ENCODE measurements at regions of chr2 and their contacts with region 1.

Region 1: DNA sequence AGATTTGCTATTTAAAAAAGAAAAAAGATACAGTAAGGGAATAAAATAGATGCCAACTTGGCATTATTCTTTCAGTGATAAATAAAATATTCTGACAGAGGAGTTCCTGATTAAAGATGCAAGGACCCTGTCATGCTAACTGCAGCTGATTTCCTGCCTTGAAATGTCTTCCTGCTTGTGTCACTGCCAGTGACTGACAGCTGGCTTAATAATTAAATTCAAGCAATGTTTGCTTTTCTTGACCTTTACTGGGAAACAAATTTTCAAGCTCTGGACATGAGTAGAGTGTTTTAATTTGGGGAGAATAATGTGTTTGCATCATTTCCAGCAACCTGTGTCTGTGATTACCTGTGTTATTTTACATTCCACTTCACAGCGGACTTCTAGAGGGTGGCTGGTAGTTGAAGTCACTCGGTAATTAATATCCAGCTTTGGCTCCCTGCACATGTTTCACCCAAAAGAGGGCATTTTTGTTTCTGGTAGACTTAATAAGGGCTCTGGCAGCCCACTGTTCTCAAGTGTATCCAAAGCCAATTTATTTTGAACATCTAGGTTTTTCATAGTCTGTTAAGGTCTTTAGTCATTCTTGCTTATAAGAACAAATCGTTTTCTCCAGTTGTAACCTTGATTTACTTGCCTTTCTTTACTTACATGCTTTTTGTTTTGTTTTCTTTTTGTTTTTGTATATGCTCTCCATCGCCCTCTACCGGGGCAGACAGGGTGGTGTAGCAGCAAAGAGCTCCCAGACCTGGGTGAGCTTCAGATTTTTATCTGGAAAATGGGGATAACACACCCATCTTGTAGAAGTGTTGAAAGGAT is 48.5 kb upstream of the PROKR1 start:
- DNase-seq: peak; percentile 27
- ATAC-seq: peak; percentile 83
- H3K4me3 ChIP-seq: peak overlapping the region; percentile 38; the same call in 1 of the 2 replicates
- H3K27ac ChIP-seq: peak overlapping the region; percentile 31; the same call in 1 of the 2 replicates
- H3K4me1 ChIP-seq: no peaks in the 10 kb centered on the region; the same call in 1 of the 2 replicates
- H3K27me3 ChIP-seq: no peaks in the 10 kb centered on the region
- CTCF ChIP-seq: peak; percentile 62 to 93 (median 85)
- EP300 ChIP-seq: no peak
- POLR2A ChIP-seq: no peak
- RAD21 ChIP-seq: peak; percentile 55

Region 2: DNA sequence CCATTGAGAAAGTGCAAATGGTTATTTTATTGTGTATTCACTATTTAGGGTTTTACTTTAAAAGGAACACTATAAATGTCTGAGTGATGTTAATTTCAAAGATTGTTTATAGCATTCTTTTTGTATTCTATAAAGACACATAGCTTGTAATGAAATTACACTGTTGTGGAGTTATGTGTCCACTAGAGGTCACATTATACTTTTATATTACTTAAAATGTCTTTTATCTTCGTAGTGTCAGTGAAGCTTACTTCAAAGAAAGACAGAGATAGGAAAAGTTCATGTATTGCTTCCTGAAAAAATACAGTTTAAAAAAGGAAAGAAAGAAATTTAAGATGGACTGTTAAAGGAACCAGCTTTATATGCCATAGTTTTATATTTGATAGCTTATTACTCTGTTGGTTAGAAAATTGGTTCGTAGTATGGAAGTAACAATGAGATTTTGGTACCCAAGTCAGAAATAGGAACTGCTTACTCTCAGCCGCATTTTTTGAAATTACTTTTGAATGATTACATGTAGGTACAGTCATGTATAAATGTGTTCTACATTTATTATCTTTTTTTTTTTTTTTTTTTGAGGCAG is 107.0 kb before region 1 on chr2:
- CTCF ChIA-PET with region 1: interaction called, 24 read pairs
- POLR2A ChIA-PET with region 1: no interaction called
- RAD21 ChIA-PET with region 1: interaction called, 5 read pairs
- SMC1A ChIA-PET with region 1: interaction called, 16 read pairs
- in situ Hi-C with region 1: no loop called
- intact Hi-C with region 1: loop called (anchors 5 kb)
- DNase-seq: no peak
- ATAC-seq: peak; percentile 74
- H3K4me3 ChIP-seq: no peak overlapping the region
- H3K27ac ChIP-seq: no peak overlapping the region
- H3K4me1 ChIP-seq: peaks cover 5% of the 10 kb centered on the region; the same call in 1 of the 2 replicates
- H3K27me3 ChIP-seq: no peaks in the 10 kb centered on the region
- CTCF ChIP-seq: peak in 2 of 3 experiments; percentile 26 to 49; a peak in 3 of 6 replicates
- EP300 ChIP-seq: no peak
- POLR2A ChIP-seq: no peak
- RAD21 ChIP-seq: peak; percentile 37

Region 3: DNA sequence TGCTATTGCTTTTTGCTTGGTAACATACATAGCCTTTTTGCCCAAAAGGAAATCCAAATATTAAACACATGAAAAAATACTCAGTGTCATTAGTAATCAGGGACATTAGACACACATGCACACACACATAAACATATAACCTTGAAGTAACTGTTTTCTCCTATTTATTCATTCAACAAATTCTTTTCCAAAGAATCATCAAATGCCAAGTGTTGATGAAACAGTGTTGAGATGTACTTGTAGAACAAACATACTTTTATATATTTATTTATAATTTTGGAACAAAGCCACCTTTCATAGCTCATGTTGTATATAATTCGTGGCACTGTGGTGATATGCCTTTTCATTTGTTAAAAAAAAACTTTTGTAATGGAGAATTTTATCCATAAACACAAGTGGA is 46.5 kb before region 1 on chr2:
- CTCF ChIA-PET with region 1: interaction called, 3 read pairs
- POLR2A ChIA-PET with region 1: no interaction called
- RAD21 ChIA-PET with region 1: no interaction called
- SMC1A ChIA-PET with region 1: interaction called, 3 read pairs
- in situ Hi-C with region 1: no loop called
- intact Hi-C with region 1: loop called (anchors 2 kb)
- DNase-seq: no peak
- ATAC-seq: no peak
- H3K4me3 ChIP-seq: no peak overlapping the region
- H3K27ac ChIP-seq: no peak overlapping the region
- H3K4me1 ChIP-seq: no peaks in the 10 kb centered on the region
- H3K27me3 ChIP-seq: no peaks in the 10 kb centered on the region
- CTCF ChIP-seq: no peak
- EP300 ChIP-seq: no peak
- POLR2A ChIP-seq: no peak
- RAD21 ChIP-seq: no peak

Region 4: DNA sequence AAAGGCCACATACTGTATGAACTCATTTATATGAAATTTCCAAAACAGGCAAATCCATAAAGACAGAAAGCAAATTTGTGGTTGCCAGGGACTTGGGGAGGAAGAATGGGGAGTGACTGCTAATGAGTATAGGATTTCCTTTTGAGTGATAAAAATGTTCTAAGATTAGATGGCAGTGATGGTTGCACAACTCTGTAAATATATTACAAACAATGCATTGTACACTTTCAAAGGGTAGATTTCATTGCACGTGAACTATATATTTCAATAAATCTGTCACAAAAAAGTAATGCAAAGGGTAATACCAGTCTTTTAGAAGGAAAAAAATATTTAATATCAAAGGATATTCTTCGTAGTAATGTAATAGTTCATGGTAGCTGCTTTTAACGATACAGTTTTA is 15.2 kb before region 1 on chr2:
- CTCF ChIA-PET with region 1: interaction called, 32 read pairs
- POLR2A ChIA-PET with region 1: no interaction called
- RAD21 ChIA-PET with region 1: no interaction called
- SMC1A ChIA-PET with region 1: no interaction called
- in situ Hi-C with region 1: no loop called
- intact Hi-C with region 1: no loop called
- DNase-seq: no peak
- ATAC-seq: no peak
- H3K4me3 ChIP-seq: no peak overlapping the region
- H3K27ac ChIP-seq: no peak overlapping the region
- H3K4me1 ChIP-seq: no peaks in the 10 kb centered on the region
- H3K27me3 ChIP-seq: no peaks in the 10 kb centered on the region
- CTCF ChIP-seq: no peak
- EP300 ChIP-seq: no peak
- POLR2A ChIP-seq: no peak
- RAD21 ChIP-seq: no peak

Region 5: GRCh38 chr2:68605939-68606338 is 11.1 kb after region 1 on chr2:
- CTCF ChIA-PET with region 1: interaction called, 21 read pairs
- POLR2A ChIA-PET with region 1: no interaction called
- RAD21 ChIA-PET with region 1: no interaction called
- SMC1A ChIA-PET with region 1: interaction called, 3 read pairs
- in situ Hi-C with region 1: no loop called
- intact Hi-C with region 1: no loop called
- DNase-seq: no peak
- ATAC-seq: no peak
- H3K4me3 ChIP-seq: no peak overlapping the region
- H3K27ac ChIP-seq: no peak overlapping the region
- H3K4me1 ChIP-seq: no peaks in the 10 kb centered on the region
- H3K27me3 ChIP-seq: no peaks in the 10 kb centered on the region
- CTCF ChIP-seq: no peak
- EP300 ChIP-seq: no peak
- POLR2A ChIP-seq: no peak
- RAD21 ChIP-seq: no peak